ENCODE measurements at regions of chr5 and their contacts with region 1.

Region 1: DNA sequence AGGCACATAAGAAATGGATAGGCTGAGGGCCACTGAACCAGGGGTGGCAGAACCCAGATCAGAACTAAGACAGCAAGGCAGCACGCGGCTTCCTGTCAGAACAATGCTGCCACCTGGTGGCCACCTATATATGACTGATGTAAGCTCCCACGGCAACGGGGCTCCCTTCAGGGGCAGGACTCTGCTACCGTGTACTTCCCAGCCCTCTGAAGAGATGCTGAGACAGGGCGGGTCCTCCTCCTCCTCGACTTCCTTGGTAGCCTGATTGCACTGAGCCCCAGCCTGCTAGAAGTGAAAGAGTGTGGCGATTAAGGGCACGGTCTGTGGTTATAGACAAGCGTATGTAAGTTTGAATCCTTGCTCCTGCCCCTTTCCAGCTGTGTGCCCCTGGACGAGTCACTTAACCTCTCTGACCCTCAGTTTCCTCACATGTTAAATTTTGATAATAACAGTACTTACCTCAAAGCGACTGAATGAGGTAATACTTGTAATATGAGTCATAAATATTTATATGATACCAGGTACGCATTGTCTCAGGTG is 13.3 kb downstream of the RPS14 start:
- DNase-seq: peak; percentile 81 to 96 (median 90)
- ATAC-seq: peak; percentile 99
- H3K4me3 ChIP-seq: no peak overlapping the region
- H3K4me3 Mint-ChIP-seq: peak overlapping the region; percentile 42
- H3K27ac ChIP-seq: no peak overlapping the region
- H3K27ac Mint-ChIP-seq: peak overlapping the region; percentile 29
- H3K4me1 ChIP-seq: peaks cover 9% of the 10 kb centered on the region
- H3K4me1 Mint-ChIP-seq: peaks cover 7% of the 10 kb centered on the region
- H3K27me3 ChIP-seq: no peaks in the 10 kb centered on the region
- H3K27me3 Mint-ChIP-seq: no peaks in the 10 kb centered on the region
- CTCF ChIP-seq: peak; percentile 83

Region 2: DNA sequence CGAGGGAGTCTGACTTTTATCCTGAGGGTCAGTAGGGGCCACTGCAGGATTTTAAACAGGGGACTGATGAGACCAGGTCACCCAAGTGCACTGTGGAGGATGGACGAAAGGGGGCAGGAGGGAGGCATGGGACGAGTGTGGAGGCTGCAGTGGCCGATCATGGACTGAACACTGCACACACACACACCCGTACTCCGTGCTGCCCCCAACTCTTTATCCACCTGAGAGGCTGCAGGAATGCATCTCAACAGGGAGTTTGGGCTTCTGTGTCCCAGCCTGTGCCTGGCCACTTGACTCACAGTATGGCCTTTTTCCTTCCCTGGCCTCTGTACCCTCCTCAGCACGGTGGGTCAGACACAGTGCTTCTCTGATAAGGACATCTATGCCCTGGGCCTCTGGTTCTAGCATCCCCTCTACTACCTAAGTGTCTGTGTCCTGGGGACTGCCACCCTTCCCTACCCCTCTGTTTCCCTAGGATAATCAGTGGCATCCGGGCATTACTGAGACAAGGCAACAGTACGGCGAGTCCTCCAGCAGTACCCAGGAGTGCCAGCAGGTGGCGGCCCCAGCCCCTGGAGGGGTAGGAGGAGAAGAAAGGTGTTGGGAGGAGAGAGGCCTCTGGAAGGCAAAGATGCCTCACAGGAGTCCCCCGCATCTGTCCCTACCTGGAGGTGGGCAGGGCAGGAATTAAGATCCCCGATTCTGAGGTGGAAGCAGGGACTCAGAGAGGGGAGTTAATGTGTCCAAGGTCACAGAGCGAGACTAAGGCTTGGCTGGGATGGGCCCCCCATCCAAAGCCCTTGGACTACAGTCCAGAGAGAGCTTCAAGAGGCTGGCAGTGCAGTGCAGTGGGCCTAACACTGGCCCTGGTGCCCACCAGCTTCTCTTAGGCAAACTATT is 274.7 kb before region 1 on chr5:
- CTCF ChIA-PET with region 1: no interaction called
- POLR2A ChIA-PET with region 1: no interaction called
- intact Hi-C with region 1: loop called (anchors 1 kb)
- DNase-seq: peak; percentile 48 to 79 (median 66)
- ATAC-seq: peak; percentile 77
- H3K4me3 ChIP-seq: no peak overlapping the region
- H3K4me3 Mint-ChIP-seq: no peak overlapping the region
- H3K27ac ChIP-seq: no peak overlapping the region
- H3K27ac Mint-ChIP-seq: no peak overlapping the region
- H3K4me1 ChIP-seq: no peaks in the 10 kb centered on the region
- H3K4me1 Mint-ChIP-seq: no peaks in the 10 kb centered on the region
- H3K27me3 ChIP-seq: peaks cover 10 to 18% of the 10 kb centered on the region in 2 experiments
- H3K27me3 Mint-ChIP-seq: peaks cover 37% of the 10 kb centered on the region
- CTCF ChIP-seq: peak; percentile 87

Region 3: DNA sequence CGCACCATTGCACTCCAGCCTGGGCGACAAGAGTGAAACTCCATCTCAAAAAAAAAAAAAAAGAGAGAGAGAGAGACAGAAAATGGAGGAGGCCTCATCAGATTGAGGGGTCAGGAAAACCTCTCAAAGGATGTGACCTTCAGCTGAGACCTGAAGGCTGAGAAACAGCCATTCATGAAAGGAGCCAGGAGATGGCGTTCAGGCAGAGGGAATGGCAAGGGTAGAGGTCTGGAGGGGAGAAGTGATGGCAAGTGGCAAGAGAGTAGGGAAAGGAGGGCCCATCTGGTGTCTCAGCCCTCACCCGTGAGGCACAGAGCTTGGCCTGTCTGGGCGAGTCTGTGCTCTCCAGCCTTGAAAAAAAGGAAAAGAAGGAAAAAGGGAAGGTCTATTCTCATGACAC is 163.7 kb before region 1 on chr5:
- CTCF ChIA-PET with region 1: no interaction called
- POLR2A ChIA-PET with region 1: no interaction called
- intact Hi-C with region 1: loop called (anchors 5 kb)
- DNase-seq: peak in 2 of 14 experiments; percentile 16 to 23
- ATAC-seq: no peak
- H3K4me3 ChIP-seq: no peak overlapping the region
- H3K4me3 Mint-ChIP-seq: no peak overlapping the region
- H3K27ac ChIP-seq: no peak overlapping the region
- H3K27ac Mint-ChIP-seq: no peak overlapping the region
- H3K4me1 ChIP-seq: no peaks in the 10 kb centered on the region
- H3K4me1 Mint-ChIP-seq: no peaks in the 10 kb centered on the region
- H3K27me3 ChIP-seq: no peaks in the 10 kb centered on the region
- H3K27me3 Mint-ChIP-seq: no peaks in the 10 kb centered on the region
- CTCF ChIP-seq: no peak

Region 4: DNA sequence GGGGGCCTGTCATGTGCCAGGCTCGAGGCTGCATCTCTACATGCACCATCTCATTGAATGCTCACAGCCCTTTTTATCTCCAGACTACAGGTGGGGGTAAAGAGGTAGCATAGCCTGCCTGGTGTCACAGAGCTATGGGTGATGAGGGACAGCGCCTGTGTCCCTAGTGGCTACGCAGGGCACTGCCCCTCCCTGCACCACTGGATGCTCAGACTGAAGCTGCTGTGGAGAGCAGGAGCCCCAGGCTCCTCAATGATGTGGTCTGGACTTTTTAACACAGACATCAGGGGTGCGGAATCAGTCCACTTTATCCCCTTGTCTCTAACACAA is 149.4 kb before region 1 on chr5:
- CTCF ChIA-PET with region 1: no interaction called
- POLR2A ChIA-PET with region 1: no interaction called
- intact Hi-C with region 1: no loop called
- DNase-seq: peak in 1 of 14 experiments; percentile 5
- ATAC-seq: no peak
- H3K4me3 ChIP-seq: no peak overlapping the region
- H3K4me3 Mint-ChIP-seq: no peak overlapping the region
- H3K27ac ChIP-seq: no peak overlapping the region
- H3K27ac Mint-ChIP-seq: no peak overlapping the region
- H3K4me1 ChIP-seq: no peaks in the 10 kb centered on the region
- H3K4me1 Mint-ChIP-seq: no peaks in the 10 kb centered on the region
- H3K27me3 ChIP-seq: no peaks in the 10 kb centered on the region
- H3K27me3 Mint-ChIP-seq: no peaks in the 10 kb centered on the region
- CTCF ChIP-seq: no peak

Region 5: DNA sequence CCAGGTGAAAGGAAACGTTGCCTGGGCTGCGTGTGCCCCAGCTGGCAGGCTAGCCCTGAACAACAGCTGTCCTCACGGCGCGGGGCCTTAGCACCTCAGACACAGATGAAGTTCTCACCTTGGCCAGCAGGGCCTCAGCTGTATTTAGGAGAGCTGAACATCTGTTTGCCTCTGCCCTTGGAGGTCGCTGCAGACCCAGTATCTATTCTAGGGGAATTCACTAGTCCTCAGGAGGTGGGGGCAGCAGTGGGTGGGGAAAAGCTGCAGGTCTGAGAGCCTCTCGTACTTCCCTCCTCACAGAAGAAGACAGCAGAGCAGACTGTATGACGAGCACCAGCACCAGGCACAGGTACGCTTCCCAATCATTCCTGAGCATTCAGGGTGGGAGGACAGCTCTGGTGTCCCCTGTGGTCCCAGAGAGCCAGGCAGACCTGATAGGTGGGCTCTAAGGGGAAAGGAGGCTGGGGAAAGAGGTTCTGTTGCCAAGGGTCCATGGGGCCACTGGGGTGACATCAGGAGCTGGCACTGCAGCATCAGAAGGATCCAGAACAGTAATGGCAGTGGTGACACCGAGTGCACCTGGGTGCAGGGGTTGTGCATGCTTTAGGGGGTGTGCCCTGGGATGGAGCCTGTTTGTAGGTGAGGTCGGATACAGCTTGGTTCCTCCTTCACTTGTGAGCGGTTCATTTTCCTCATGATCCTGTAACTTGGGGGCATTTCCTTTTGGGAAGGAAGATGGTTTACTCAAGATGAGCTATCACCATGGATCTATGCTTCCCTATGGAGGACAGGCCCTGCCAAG is 37.3 kb before region 1 on chr5:
- CTCF ChIA-PET with region 1: interaction called, 28 read pairs
- POLR2A ChIA-PET with region 1: interaction called, 4 read pairs
- intact Hi-C with region 1: loop called (anchors 1 to 2 kb)
- DNase-seq: peak in 5 of 14 experiments; percentile 17 to 69 (median 27)
- ATAC-seq: peak; percentile 62
- H3K4me3 ChIP-seq: no peak overlapping the region
- H3K4me3 Mint-ChIP-seq: no peak overlapping the region
- H3K27ac ChIP-seq: no peak overlapping the region
- H3K27ac Mint-ChIP-seq: peak overlapping the region; percentile 65
- H3K4me1 ChIP-seq: no peaks in the 10 kb centered on the region
- H3K4me1 Mint-ChIP-seq: no peaks in the 10 kb centered on the region
- H3K27me3 ChIP-seq: no peaks in the 10 kb centered on the region
- H3K27me3 Mint-ChIP-seq: no peaks in the 10 kb centered on the region
- CTCF ChIP-seq: no peak